Pancreas (tissue), 10 donors: ENCODE measurements at regions of chr22 and their contacts with region 1.

Region 1: GRCh38 chr22:23548501-23549197 is 31.4 kb downstream of the IGLL1 start:
- DNase-seq: peak in 1 of 6 donors; percentile 35
- ATAC-seq: no peak
- H3K4me3 ChIP-seq: no peak overlapping the region
- H3K27ac ChIP-seq: no peak overlapping the region
- H3K4me1 ChIP-seq: no peaks in the 10 kb centered on the region
- H3K27me3 ChIP-seq: no peaks in the 10 kb centered on the region
- CTCF ChIP-seq: no peak

Region 2: GRCh38 chr22:23608583-23608982 is 59.9 kb after region 1 on chr22:
- intact Hi-C with region 1: no loop called
- DNase-seq: no peak
- ATAC-seq: no peak
- H3K4me3 ChIP-seq: no peak overlapping the region
- H3K27ac ChIP-seq: no peak overlapping the region
- H3K4me1 ChIP-seq: no peaks in the 10 kb centered on the region
- H3K27me3 ChIP-seq: no peaks in the 10 kb centered on the region
- CTCF ChIP-seq: no peak

Region 3: GRCh38 chr22:23841736-23842445 is 293.2 kb after region 1 on chr22:
- intact Hi-C with region 1: loop called in 1 of 3 experiments (anchors 5 kb)
- DNase-seq: peak in 1 of 6 donors; percentile 64
- ATAC-seq: no peak
- H3K4me3 ChIP-seq: no peak overlapping the region
- H3K27ac ChIP-seq: no peak overlapping the region
- H3K4me1 ChIP-seq: peaks cover 0 to 6% (median 0%) of the 10 kb centered on the region in 3 donors
- H3K27me3 ChIP-seq: no peaks in the 10 kb centered on the region
- CTCF ChIP-seq: no peak